CD14-positive monocyte (primary cell): ENCODE measurements at regions of chr15 and their contacts with region 1.

Region 1: GRCh38 chr15:58331903-58332675 is 99.7 kb upstream of the LIPC start:
- DNase-seq: peak; percentile 98 to 99 (median 99)
- H3K4me3 ChIP-seq: peak overlapping the region in 2 of 3 experiments; percentile 13 to 61
- H3K4me3 Mint-ChIP-seq: peak overlapping the region; percentile 55 to 89
- H3K27ac ChIP-seq: peak overlapping the region; percentile 99 to 100
- H3K27ac Mint-ChIP-seq: peak overlapping the region; percentile 99 to 100 (median 100)
- H3K4me1 ChIP-seq: peaks cover 50 to 58% of the 10 kb centered on the region in 2 donors
- H3K4me1 Mint-ChIP-seq: peaks cover 56% of the 10 kb centered on the region
- H3K27me3 ChIP-seq: no peaks in the 10 kb centered on the region
- H3K27me3 Mint-ChIP-seq: peaks cover 0 to 7% (median 0%) of the 10 kb centered on the region in 3 donors
- CTCF ChIP-seq: no peak

Region 2: GRCh38 chr15:58146749-58147148 is 185.3 kb before region 1 on chr15:
- intact Hi-C with region 1: loop called in 1 of 2 experiments (anchors 10 kb)
- DNase-seq: peak; percentile 93 to 98 (median 98)
- H3K4me3 ChIP-seq: peak overlapping the region in 1 of 3 experiments; percentile 55
- H3K4me3 Mint-ChIP-seq: peak overlapping the region; percentile 58 to 78
- H3K27ac ChIP-seq: peak overlapping the region; percentile 98
- H3K27ac Mint-ChIP-seq: peak overlapping the region; percentile 99 to 100 (median 100)
- H3K4me1 ChIP-seq: peaks cover 66 to 79% of the 10 kb centered on the region in 2 donors
- H3K4me1 Mint-ChIP-seq: peaks cover 64% of the 10 kb centered on the region
- H3K27me3 ChIP-seq: no peaks in the 10 kb centered on the region
- H3K27me3 Mint-ChIP-seq: peaks cover 0 to 2% (median 0%) of the 10 kb centered on the region in 3 donors
- CTCF ChIP-seq: no peak

Region 3: GRCh38 chr15:58247855-58248766 is 84.0 kb before region 1 on chr15:
- intact Hi-C with region 1: loop called in 1 of 2 experiments (anchors 2 kb)
- DNase-seq: peak; percentile 96 to 99 (median 97)
- H3K4me3 ChIP-seq: peak overlapping the region in 1 of 3 experiments; percentile 49
- H3K4me3 Mint-ChIP-seq: peak overlapping the region; percentile 47 to 76
- H3K27ac ChIP-seq: peak overlapping the region; percentile 92 to 97
- H3K27ac Mint-ChIP-seq: peak overlapping the region; percentile 89 to 97 (median 95)
- H3K4me1 ChIP-seq: peaks cover 79 to 85% of the 10 kb centered on the region in 2 donors
- H3K4me1 Mint-ChIP-seq: peaks cover 96% of the 10 kb centered on the region
- H3K27me3 ChIP-seq: no peaks in the 10 kb centered on the region
- H3K27me3 Mint-ChIP-seq: peaks cover 0 to 4% (median 0%) of the 10 kb centered on the region in 3 donors
- CTCF ChIP-seq: no peak

Region 4: DNA sequence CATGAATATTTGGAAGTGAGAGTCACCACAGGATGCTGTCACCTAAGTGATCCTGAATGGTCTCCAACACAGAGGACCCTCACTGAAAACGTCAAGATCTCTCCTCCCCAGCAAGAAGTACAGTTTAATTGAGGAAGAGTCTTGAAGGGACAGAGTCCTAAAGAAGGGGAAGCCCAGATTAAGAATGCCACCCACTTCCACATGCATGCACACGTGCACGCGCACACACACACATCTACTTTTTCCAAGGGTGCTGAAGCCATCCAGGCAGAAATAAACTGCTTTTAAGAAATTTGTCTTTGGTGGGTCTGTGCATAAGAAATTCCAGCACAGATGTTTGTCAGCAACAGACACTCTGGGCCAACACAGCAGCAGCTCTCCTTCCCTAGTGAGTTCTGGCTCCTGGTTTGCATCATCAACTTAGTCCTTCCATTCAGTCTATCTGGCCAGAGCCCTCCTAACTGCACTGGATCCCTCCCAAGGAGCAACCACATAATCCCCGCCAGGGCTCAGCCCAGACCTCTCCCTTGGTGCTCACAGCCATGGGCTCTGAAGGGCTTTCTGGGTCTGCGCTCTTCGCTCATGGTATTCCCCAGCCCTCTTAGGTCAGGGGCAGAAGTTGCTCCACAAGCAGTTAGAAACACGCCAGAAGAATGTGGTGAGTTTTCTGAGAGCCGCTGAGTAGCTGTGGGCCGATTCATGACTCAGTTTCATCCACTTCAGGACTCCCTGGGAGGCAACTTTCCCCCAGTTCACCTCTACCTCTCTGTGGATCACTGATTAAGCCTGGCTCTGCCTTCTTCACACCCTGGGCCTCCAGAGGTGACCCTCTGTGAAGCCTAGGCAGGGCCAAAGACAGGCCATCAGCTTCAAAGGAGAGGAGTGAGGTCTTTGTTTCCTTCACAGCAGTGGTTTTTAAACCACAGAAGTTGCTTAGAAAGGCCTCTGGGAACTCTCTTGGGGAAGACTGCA is 32.9 kb before region 1 on chr15:
- intact Hi-C with region 1: no loop called
- DNase-seq: peak; percentile 16 to 53 (median 45)
- H3K4me3 ChIP-seq: no peak overlapping the region
- H3K4me3 Mint-ChIP-seq: no peak overlapping the region
- H3K27ac ChIP-seq: no peak overlapping the region
- H3K27ac Mint-ChIP-seq: peak overlapping the region in 1 of 7 donors; percentile 8
- H3K4me1 ChIP-seq: peaks cover 20 to 22% of the 10 kb centered on the region in 2 donors
- H3K4me1 Mint-ChIP-seq: peaks cover 26% of the 10 kb centered on the region
- H3K27me3 ChIP-seq: no peaks in the 10 kb centered on the region
- H3K27me3 Mint-ChIP-seq: peaks cover 0 to 2% (median 1%) of the 10 kb centered on the region in 3 donors
- CTCF ChIP-seq: no peak

Region 5: DNA sequence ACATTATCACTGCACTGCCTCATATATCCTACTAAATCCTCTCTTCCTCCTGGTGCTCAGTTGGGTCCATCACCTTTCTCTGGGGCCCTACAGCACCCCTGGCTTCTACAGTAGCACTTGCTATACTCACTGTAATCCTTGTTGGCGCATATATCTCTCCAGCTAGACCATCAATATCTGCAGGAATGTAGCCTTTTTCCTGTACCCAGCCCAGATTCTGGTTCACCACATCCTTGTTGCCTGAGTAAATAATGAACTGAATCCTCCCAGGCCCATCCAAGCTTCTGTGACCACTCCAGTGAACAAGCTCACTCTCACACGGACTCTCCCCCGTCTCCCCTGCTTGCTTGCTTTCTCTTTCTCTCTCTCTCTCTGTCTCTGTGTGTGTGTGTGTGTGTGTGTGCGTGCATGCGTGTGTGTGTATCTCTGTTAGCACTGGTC is 37.2 kb after region 1 on chr15:
- intact Hi-C with region 1: no loop called
- DNase-seq: peak in 1 of 3 donors; percentile 13
- H3K4me3 ChIP-seq: no peak overlapping the region
- H3K4me3 Mint-ChIP-seq: peak overlapping the region; percentile 58 to 73
- H3K27ac ChIP-seq: no peak overlapping the region
- H3K27ac Mint-ChIP-seq: peak overlapping the region in 2 of 7 donors; percentile 23 to 80
- H3K4me1 ChIP-seq: peaks cover 6 to 20% of the 10 kb centered on the region in 2 donors
- H3K4me1 Mint-ChIP-seq: peaks cover 34% of the 10 kb centered on the region
- H3K27me3 ChIP-seq: no peaks in the 10 kb centered on the region
- H3K27me3 Mint-ChIP-seq: peaks cover 1 to 4% (median 2%) of the 10 kb centered on the region in 3 donors
- CTCF ChIP-seq: no peak

Region 6: GRCh38 chr15:58447271-58448010 is 115.4 kb after region 1 on chr15:
- intact Hi-C with region 1: no loop called
- DNase-seq: peak; percentile 42 to 71 (median 55)
- H3K4me3 ChIP-seq: no peak overlapping the region
- H3K4me3 Mint-ChIP-seq: peak overlapping the region in 1 of 2 donors; percentile 78
- H3K27ac ChIP-seq: peak overlapping the region in 1 of 2 donors; percentile 49
- H3K27ac Mint-ChIP-seq: peak overlapping the region; percentile 22 to 93 (median 65)
- H3K4me1 ChIP-seq: peaks cover 18 to 20% of the 10 kb centered on the region in 2 donors
- H3K4me1 Mint-ChIP-seq: peaks cover 19% of the 10 kb centered on the region
- H3K27me3 ChIP-seq: no peaks in the 10 kb centered on the region
- H3K27me3 Mint-ChIP-seq: peaks cover 0 to 5% (median 0%) of the 10 kb centered on the region in 3 donors
- CTCF ChIP-seq: no peak

Region 7: GRCh38 chr15:58705105-58705504 is 373.0 kb after region 1 on chr15:
- intact Hi-C with region 1: no loop called
- DNase-seq: no peak
- H3K4me3 ChIP-seq: no peak overlapping the region
- H3K4me3 Mint-ChIP-seq: no peak overlapping the region
- H3K27ac ChIP-seq: no peak overlapping the region
- H3K27ac Mint-ChIP-seq: no peak overlapping the region
- H3K4me1 ChIP-seq: peaks cover 7 to 12% of the 10 kb centered on the region in 2 donors
- H3K4me1 Mint-ChIP-seq: peaks cover 17% of the 10 kb centered on the region
- H3K27me3 ChIP-seq: no peaks in the 10 kb centered on the region
- H3K27me3 Mint-ChIP-seq: no peaks in the 10 kb centered on the region
- CTCF ChIP-seq: no peak